Activated CD4-positive, alpha-beta T cell treated with anti-CD3 and anti-CD28 coated beads for 36 hours (primary cell): ENCODE measurements at regions of chr19 and their contacts with region 1.

Region 1: DNA sequence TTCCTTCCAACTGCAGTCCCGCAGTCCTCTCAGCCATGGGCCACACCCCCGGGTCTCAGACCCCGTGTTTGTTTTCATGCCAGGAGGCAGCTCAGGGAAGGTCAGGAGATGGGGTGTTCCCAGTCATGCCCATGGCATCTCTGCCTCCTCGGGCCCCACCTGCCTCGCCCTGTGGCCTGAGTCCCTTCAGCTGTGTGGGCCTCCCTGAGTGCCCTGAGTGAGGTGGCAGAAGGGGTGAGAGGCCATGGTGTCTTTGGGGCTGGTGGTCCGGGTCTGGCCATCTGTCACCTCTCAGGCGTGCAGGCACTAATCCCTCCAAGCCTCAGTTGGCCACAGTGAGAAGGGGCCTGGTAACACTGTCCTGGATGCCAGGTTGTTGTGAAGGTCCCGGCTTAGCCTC is 10.9 kb upstream of the KDM4B start:
- DNase-seq: no peak
- ATAC-seq: no peak
- H3K4me3 Mint-ChIP-seq: no peak overlapping the region
- H3K27ac Mint-ChIP-seq: no peak overlapping the region
- H3K4me1 Mint-ChIP-seq: no peaks in the 10 kb centered on the region
- H3K27me3 Mint-ChIP-seq: no peaks in the 10 kb centered on the region

Region 2: DNA sequence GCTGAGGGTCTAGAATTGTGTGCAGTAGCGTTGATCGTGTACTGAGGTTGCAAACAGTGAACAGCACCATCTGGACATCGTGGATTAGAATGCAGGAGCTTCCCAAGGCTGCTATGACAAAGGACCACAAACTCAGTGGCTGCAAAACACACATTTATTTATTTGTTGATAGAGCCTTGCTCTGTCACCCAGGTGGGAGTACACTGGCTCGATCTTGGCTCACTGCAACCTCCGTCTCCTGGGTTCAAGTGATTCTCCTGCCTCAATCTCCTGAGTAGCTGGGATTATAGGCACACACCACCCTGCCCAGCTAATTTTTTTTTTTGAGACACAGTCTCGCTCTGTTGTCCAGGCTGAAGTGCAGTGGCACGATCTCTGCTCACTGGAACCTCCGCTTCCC is 51.0 kb before region 1 on chr19:
- CTCF ChIA-PET with region 1: no interaction called
- POLR2A ChIA-PET with region 1: no interaction called
- intact Hi-C with region 1: no loop called
- DNase-seq: no peak
- ATAC-seq: no peak
- H3K4me3 Mint-ChIP-seq: no peak overlapping the region
- H3K27ac Mint-ChIP-seq: no peak overlapping the region
- H3K4me1 Mint-ChIP-seq: peaks cover 11% of the 10 kb centered on the region
- H3K27me3 Mint-ChIP-seq: no peaks in the 10 kb centered on the region

Region 3: DNA sequence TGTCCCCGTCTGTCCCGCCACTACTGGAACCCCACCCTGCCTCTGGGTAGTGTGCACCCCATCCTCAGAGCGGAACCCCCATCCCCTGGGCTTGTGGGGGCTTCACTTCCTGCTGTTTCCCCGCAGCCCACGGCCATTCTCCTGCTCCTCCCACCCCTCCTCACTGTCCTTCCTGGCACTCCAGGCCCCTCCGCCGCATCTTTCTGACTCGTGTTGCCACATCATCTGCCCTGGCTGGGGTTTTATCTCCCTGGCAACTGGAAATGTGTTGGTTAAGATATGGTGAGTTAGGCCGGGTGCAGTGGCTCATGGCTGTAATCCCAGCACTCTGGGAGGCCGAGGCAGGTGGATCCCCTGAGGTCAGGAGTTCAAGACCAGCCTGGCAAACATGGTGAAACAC is 48.2 kb after region 1 on chr19:
- CTCF ChIA-PET with region 1: no interaction called
- POLR2A ChIA-PET with region 1: no interaction called
- intact Hi-C with region 1: no loop called
- DNase-seq: no peak
- ATAC-seq: no peak
- H3K4me3 Mint-ChIP-seq: no peak overlapping the region
- H3K27ac Mint-ChIP-seq: no peak overlapping the region
- H3K4me1 Mint-ChIP-seq: peaks cover 5% of the 10 kb centered on the region
- H3K27me3 Mint-ChIP-seq: no peaks in the 10 kb centered on the region

Region 4: DNA sequence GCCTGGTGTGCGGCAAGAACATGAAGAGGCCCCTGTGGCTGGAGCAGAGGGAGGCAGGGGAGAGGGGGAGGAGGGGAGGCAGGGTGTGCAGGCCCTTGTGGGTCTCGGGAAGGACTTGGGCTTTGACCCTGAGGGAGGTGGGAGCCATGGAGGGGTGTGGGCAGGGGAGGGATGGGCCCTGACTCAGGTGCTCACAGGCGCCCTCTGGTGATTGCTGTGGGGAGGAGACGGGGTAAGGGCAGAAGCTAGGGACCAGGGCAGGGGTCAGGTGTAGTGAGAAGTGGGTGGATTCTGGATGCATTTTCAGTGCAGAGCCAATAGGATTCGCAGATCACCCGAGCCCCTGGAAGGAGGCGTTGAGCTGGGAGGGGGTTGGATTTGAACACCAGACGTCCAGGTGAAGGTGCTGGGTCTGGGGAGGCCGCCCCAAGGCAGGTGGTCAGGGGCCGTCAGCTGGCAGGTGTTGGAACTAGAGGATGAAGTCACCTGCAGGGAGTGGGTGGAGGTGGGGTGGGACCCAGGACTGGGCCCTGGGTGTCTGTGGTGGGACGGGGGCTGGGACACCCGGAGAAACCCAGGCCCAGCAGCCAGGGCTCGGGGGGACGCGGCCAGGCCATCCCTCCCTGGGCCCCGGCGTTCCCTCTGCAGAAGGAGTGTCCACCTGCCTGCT is 196.3 kb after region 1 on chr19:
- CTCF ChIA-PET with region 1: no interaction called
- POLR2A ChIA-PET with region 1: interaction called, 13 read pairs
- intact Hi-C with region 1: no loop called
- DNase-seq: peak; percentile 72
- ATAC-seq: peak; percentile 84
- H3K4me3 Mint-ChIP-seq: no peak overlapping the region
- H3K27ac Mint-ChIP-seq: peak overlapping the region; percentile 47
- H3K4me1 Mint-ChIP-seq: no peaks in the 10 kb centered on the region
- H3K27me3 Mint-ChIP-seq: no peaks in the 10 kb centered on the region

Region 5: GRCh38 chr19:5170329-5170745 is 212.4 kb after region 1 on chr19:
- CTCF ChIA-PET with region 1: no interaction called
- POLR2A ChIA-PET with region 1: no interaction called
- intact Hi-C with region 1: no loop called
- DNase-seq: peak; percentile 78
- ATAC-seq: peak; percentile 70
- H3K4me3 Mint-ChIP-seq: no peak overlapping the region
- H3K27ac Mint-ChIP-seq: no peak overlapping the region
- H3K4me1 Mint-ChIP-seq: peaks cover 7% of the 10 kb centered on the region
- H3K27me3 Mint-ChIP-seq: peaks cover 2% of the 10 kb centered on the region